ENCODE measurements at regions of chr1 and their contacts with region 1.

Region 1: DNA sequence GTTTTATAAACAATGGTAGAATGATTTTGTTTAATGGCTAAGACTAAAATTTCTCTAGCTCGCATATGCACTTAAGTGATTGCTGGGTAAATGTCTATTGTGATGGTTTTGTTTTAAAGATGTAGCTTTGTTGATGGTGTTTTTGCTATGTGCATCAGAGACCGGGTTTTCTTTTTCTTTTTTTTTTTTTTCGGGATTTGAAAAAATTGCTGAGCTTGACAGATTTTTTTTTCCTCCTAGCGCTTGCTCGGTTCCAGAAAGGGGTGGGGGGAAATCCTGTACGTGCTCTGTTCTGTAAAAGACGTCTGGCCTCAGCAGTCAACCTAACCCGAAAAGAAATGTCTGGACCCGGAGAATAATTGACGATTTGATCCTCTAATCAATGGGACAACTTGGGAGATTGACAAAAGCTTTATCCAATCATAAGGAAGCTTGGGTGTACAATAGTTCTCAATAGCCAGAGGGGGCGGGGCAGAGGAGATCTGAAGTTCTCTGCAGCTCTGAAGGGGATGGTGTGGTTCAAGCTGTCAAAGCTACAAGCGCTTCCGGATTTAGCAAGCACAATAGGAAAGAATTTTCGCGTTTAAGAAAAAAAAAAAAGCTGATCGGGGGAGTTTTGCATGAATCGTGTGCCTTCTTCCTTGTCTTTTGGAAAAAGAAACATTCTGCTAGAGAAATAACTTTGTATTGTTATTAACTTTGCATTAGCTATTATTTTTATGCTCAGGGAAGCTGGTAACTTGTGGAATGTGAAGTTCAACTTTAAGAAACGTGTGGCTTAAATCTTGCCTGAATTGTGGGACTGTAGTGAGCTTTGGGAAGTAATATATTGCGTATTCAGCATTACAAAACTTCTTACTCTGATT is 4.5 kb upstream of the NFIA start:
- DNase-seq: peak; percentile 77 to 99 (median 91)
- ATAC-seq: peak; percentile 68
- H3K4me3 ChIP-seq: peak overlapping the region; percentile 66 to 74
- H3K4me3 Mint-ChIP-seq: peak overlapping the region; percentile 86
- H3K27ac ChIP-seq: peak overlapping the region; percentile 67 to 76
- H3K27ac Mint-ChIP-seq: peak overlapping the region; percentile 98
- H3K4me1 ChIP-seq: peaks cover 42% of the 10 kb centered on the region
- H3K4me1 Mint-ChIP-seq: peaks cover 47% of the 10 kb centered on the region
- H3K27me3 ChIP-seq: no peaks in the 10 kb centered on the region
- H3K27me3 Mint-ChIP-seq: no peaks in the 10 kb centered on the region
- CTCF ChIP-seq: no peak

Region 2: GRCh38 chr1:61043010-61043820 is 34.7 kb before region 1 on chr1:
- CTCF ChIA-PET with region 1: interaction called, 42 read pairs
- POLR2A ChIA-PET with region 1: interaction called, 4 read pairs
- intact Hi-C with region 1: loop called in 1 of 2 experiments (anchors 5 kb)
- DNase-seq: peak; percentile 73 to 89 (median 84)
- ATAC-seq: peak; percentile 98
- H3K4me3 ChIP-seq: peak overlapping the region; percentile 45 to 50
- H3K4me3 Mint-ChIP-seq: peak overlapping the region; percentile 82
- H3K27ac ChIP-seq: no peak overlapping the region
- H3K27ac Mint-ChIP-seq: no peak overlapping the region
- H3K4me1 ChIP-seq: peaks cover 6% of the 10 kb centered on the region
- H3K4me1 Mint-ChIP-seq: peaks cover 6% of the 10 kb centered on the region
- H3K27me3 ChIP-seq: peaks cover 0 to 11% of the 10 kb centered on the region in 2 experiments
- H3K27me3 Mint-ChIP-seq: peaks cover 25% of the 10 kb centered on the region
- CTCF ChIP-seq: peak; percentile 79

Region 3: GRCh38 chr1:61724813-61725694 is 647.1 kb after region 1 on chr1 and contains the start of gene TM2D1:
- CTCF ChIA-PET with region 1: no interaction called
- POLR2A ChIA-PET with region 1: no interaction called
- intact Hi-C with region 1: loop called in 1 of 2 experiments (anchors 5 kb)
- DNase-seq: peak; percentile 66 to 92 (median 84)
- ATAC-seq: peak; percentile 91
- H3K4me3 ChIP-seq: peak within 1 kb of the TSS; percentile 85 to 93
- H3K4me3 Mint-ChIP-seq: peak within 1 kb of the TSS; percentile 96
- H3K27ac ChIP-seq: peak within 1 kb of the TSS; percentile 85 to 89
- H3K27ac Mint-ChIP-seq: peak within 1 kb of the TSS; percentile 96
- H3K4me1 ChIP-seq: peaks cover 21% of the 10 kb centered on the region
- H3K4me1 Mint-ChIP-seq: peaks cover 34% of the 10 kb centered on the region
- H3K27me3 ChIP-seq: no peaks in the 10 kb centered on the region
- H3K27me3 Mint-ChIP-seq: no peaks in the 10 kb centered on the region
- CTCF ChIP-seq: no peak
- total RNA-seq, gene TM2D1: 12.7 to 14.8 TPM

Region 4: DNA sequence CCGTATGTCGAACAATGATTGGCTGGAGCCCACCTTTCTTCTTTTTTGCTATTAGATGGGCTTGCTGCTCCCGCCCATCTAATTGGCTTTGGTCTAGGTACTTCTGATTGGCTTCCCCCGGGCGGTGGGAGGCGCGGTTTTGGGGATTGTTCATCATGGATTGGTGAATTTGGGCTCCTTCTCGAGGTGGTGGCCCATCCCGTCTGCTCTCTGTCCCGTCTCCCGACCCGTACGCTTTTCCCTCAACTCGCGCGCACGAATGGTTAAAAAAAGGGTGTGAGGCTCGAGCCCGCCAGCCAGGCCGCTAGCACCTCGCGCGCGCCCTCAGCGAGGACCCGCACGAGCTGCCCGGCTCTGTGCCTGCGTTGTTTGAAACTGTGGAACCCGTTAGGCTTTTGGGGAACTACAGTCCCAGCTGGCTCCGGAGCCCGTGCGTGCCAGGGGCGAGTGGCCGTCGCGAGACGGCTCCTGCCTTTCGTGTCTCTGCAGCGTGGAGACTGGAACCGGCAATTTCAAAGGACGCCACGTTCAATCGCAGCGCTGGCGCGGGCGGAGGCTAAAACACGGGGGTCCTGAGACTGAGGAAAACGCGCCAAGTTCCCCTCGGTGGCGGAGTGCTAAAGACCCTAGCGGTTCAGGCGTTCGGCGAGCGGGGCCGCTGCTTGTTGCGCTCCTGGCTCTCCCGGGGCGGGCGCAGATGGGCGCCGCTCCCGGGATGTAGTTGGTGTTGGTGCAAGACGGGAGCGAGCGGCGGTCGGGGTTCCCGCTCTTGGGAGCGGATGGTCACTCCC is 1358.8 kb after region 1 on chr1 and contains the start of gene USP1:
- CTCF ChIA-PET with region 1: no interaction called
- POLR2A ChIA-PET with region 1: interaction called, 5 read pairs
- intact Hi-C with region 1: loop called in 1 of 2 experiments (anchors 10 kb)
- DNase-seq: peak; percentile 94 to 100 (median 96)
- ATAC-seq: peak; percentile 82
- H3K4me3 ChIP-seq: peak within 1 kb of the TSS; percentile 90 to 97
- H3K4me3 Mint-ChIP-seq: peak within 1 kb of the TSS; percentile 98
- H3K27ac ChIP-seq: peak within 1 kb of the TSS; percentile 96 to 98
- H3K27ac Mint-ChIP-seq: peak within 1 kb of the TSS; percentile 100
- H3K4me1 ChIP-seq: peaks cover 33% of the 10 kb centered on the region
- H3K4me1 Mint-ChIP-seq: peaks cover 40% of the 10 kb centered on the region
- H3K27me3 ChIP-seq: no peaks in the 10 kb centered on the region
- H3K27me3 Mint-ChIP-seq: no peaks in the 10 kb centered on the region
- CTCF ChIP-seq: no peak
- total RNA-seq, gene USP1: 23.1 to 23.7 TPM